ENCODE measurements at regions of chr5 and their contacts with region 1.

Region 1: GRCh38 chr5:132238169-132238744 is 10.6 kb upstream of the P4HA2 start:
- DNase-seq: peak; percentile 36 to 72 (median 46)
- H3K4me3 ChIP-seq: no peak overlapping the region
- H3K4me3 Mint-ChIP-seq: no peak overlapping the region
- H3K27ac ChIP-seq: no peak overlapping the region
- H3K27ac Mint-ChIP-seq: no peak overlapping the region
- H3K4me1 ChIP-seq: no peaks in the 10 kb centered on the region
- H3K4me1 Mint-ChIP-seq: no peaks in the 10 kb centered on the region
- H3K27me3 ChIP-seq: no peaks in the 10 kb centered on the region
- H3K27me3 Mint-ChIP-seq: peaks cover 0 to 11% of the 10 kb centered on the region in 2 donors

Region 2: GRCh38 chr5:132225165-132226032 is 12.9 kb before region 1 on chr5:
- CTCF ChIA-PET with region 1: interaction called, 22 read pairs
- POLR2A ChIA-PET with region 1: no interaction called
- DNase-seq: peak in 1 of 5 donors; percentile 30
- H3K4me3 ChIP-seq: no peak overlapping the region
- H3K4me3 Mint-ChIP-seq: peak overlapping the region in 5 of 7 donors; percentile 16 to 47 (median 33)
- H3K27ac ChIP-seq: no peak overlapping the region
- H3K27ac Mint-ChIP-seq: no peak overlapping the region
- H3K4me1 ChIP-seq: peaks cover 14% of the 10 kb centered on the region
- H3K4me1 Mint-ChIP-seq: peaks cover 1 to 17% (median 16%) of the 10 kb centered on the region in 3 donors
- H3K27me3 ChIP-seq: no peaks in the 10 kb centered on the region
- H3K27me3 Mint-ChIP-seq: peaks cover 15 to 29% of the 10 kb centered on the region in 2 donors

Region 3: GRCh38 chr5:132251220-132251725 is 13.0 kb after region 1 on chr5:
- CTCF ChIA-PET with region 1: interaction called, 12 read pairs
- POLR2A ChIA-PET with region 1: no interaction called
- DNase-seq: no peak
- H3K4me3 ChIP-seq: no peak overlapping the region
- H3K4me3 Mint-ChIP-seq: no peak overlapping the region
- H3K27ac ChIP-seq: no peak overlapping the region
- H3K27ac Mint-ChIP-seq: no peak overlapping the region
- H3K4me1 ChIP-seq: no peaks in the 10 kb centered on the region
- H3K4me1 Mint-ChIP-seq: no peaks in the 10 kb centered on the region
- H3K27me3 ChIP-seq: no peaks in the 10 kb centered on the region
- H3K27me3 Mint-ChIP-seq: peaks cover 10 to 14% of the 10 kb centered on the region in 2 donors

Measured in CD8-positive, alpha-beta memory T cell (primary cell).